Heart right ventricle (tissue), 16 donors: ENCODE measurements at regions of chr4 and their contacts with region 1.

Region 1: GRCh38 chr4:186946682-186947294 is 223.1 kb upstream of the FAT1 start:
- DNase-seq: no peak
- ATAC-seq: peak in 1 of 8 donors; percentile 42
- H3K4me3 ChIP-seq: no peak overlapping the region
- H3K27ac ChIP-seq: peak overlapping the region in 1 of 10 donors; percentile 75
- H3K4me1 ChIP-seq: peaks cover 0 to 36% (median 11%) of the 10 kb centered on the region in 9 donors
- H3K27me3 ChIP-seq: no peaks in the 10 kb centered on the region
- CTCF ChIP-seq: peak in 3 of 9 donors; percentile 9 to 31 (median 12)

Region 2: GRCh38 chr4:186651624-186652023 is 295.2 kb before region 1 on chr4:
- intact Hi-C with region 1: loop called in 1 of 10 experiments (anchors 10 kb)
- DNase-seq: peak; percentile 54 to 86
- ATAC-seq: peak; percentile 83 to 97 (median 94)
- H3K4me3 ChIP-seq: peak overlapping the region in 9 of 10 donors; percentile 30 to 52 (median 41)
- H3K27ac ChIP-seq: peak overlapping the region in 7 of 10 donors; percentile 4 to 74 (median 46)
- H3K4me1 ChIP-seq: peaks cover 0 to 26% (median 11%) of the 10 kb centered on the region in 9 donors
- H3K27me3 ChIP-seq: peaks cover 0 to 5% (median 0%) of the 10 kb centered on the region in 7 donors
- CTCF ChIP-seq: no peak

Region 3: DNA sequence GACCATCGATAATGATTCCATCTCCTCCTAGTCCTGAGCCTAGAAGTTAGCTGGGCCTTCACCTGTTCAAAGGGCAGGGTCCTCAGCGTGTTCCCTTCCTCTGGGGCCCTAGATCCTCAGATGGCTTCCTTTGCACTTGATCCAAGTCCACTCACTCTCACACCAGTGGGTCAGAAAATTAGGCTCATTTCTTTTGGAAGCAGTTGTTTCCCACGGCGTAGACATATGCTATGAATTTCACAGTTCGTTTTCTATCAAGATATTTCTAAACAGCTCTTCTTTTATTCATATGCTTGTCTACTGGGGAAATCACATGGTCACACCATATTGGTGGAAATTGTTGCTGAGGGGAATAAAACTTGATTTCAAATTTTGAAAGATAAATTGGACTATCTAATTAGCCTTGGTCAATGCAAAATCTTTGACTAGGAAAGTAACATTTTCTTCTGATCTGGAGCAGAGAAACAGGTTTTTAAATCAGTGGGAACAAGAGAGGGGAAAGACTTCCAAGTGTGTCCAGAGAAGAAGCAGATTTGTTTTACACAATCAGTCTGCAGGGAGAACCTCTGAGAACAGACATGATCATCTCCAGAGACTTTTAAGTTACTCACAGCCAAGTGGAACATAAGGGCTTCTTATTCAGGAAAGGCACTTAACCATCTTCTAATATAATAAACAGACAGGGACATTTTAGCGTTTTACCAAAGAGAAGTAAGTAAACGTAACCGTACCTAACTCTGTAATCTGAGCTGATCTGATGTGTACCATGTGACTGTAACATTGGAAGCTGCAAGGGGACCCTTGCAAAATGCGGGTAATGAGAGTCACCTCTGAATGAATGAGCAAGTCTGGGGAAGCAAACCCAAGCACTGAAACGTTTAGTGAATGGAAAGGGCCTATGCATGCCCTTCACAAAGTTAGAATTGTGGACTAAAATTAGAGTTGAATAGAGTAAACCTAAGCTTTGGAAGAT is 232.6 kb after region 1 on chr4:
- intact Hi-C with region 1: loop called in 1 of 10 experiments (anchors 5 kb)
- DNase-seq: no peak
- ATAC-seq: peak in 2 of 8 donors; percentile 54 to 69
- H3K4me3 ChIP-seq: no peak overlapping the region
- H3K27ac ChIP-seq: peak overlapping the region in 6 of 10 donors; percentile 31 to 62 (median 43)
- H3K4me1 ChIP-seq: peaks cover 0 to 9% (median 0%) of the 10 kb centered on the region in 9 donors
- H3K27me3 ChIP-seq: no peaks in the 10 kb centered on the region
- CTCF ChIP-seq: no peak